ENCODE measurements at regions of chr15 and their contacts with region 1.

Region 1: GRCh38 chr15:90648137-90649070 is 68.7 kb upstream of the BLM start:
- DNase-seq: peak; percentile 67 to 97 (median 76)
- ATAC-seq: peak; percentile 83
- H3K4me3 ChIP-seq: no peak overlapping the region
- H3K27ac ChIP-seq: peak overlapping the region; percentile 97
- H3K4me1 ChIP-seq: peaks cover 33 to 38% of the 10 kb centered on the region in 2 experiments
- H3K27me3 ChIP-seq: no peaks in the 10 kb centered on the region
- CTCF ChIP-seq: peak; percentile 82 to 94 (median 88)
- EP300 ChIP-seq: peak; percentile 89
- POLR2A ChIP-seq: peak; percentile 92
- RAD21 ChIP-seq: peak; percentile 96

Region 2: GRCh38 chr15:90362936-90363212 is 285.5 kb before region 1 on chr15:
- CTCF ChIA-PET with region 1: no interaction called
- POLR2A ChIA-PET with region 1: no interaction called
- in situ Hi-C with region 1: no loop called
- intact Hi-C with region 1: no loop called
- DNase-seq: peak in 2 of 4 experiments; percentile 25 to 50
- ATAC-seq: peak; percentile 63
- H3K4me3 ChIP-seq: no peak overlapping the region
- H3K27ac ChIP-seq: peak overlapping the region; percentile 67; the same call in 1 of the 3 replicates
- H3K4me1 ChIP-seq: peaks cover 0 to 17% of the 10 kb centered on the region in 2 experiments; a peak in 4 of 5 replicates
- H3K27me3 ChIP-seq: no peaks in the 10 kb centered on the region
- CTCF ChIP-seq: no peak
- EP300 ChIP-seq: no peak
- POLR2A ChIP-seq: no peak
- RAD21 ChIP-seq: no peak

Region 3: GRCh38 chr15:90665288-90666134 is 17.1 kb after region 1 on chr15:
- CTCF ChIA-PET with region 1: no interaction called
- POLR2A ChIA-PET with region 1: interaction called, 6 read pairs
- in situ Hi-C with region 1: no loop called
- intact Hi-C with region 1: loop called (anchors 2 kb)
- DNase-seq: peak; percentile 75 to 82 (median 78)
- ATAC-seq: peak; percentile 85
- H3K4me3 ChIP-seq: peak overlapping the region; percentile 50
- H3K27ac ChIP-seq: peak overlapping the region; percentile 89
- H3K4me1 ChIP-seq: peaks cover 15 to 27% of the 10 kb centered on the region in 2 experiments; a peak in 4 of 5 replicates
- H3K27me3 ChIP-seq: no peaks in the 10 kb centered on the region
- CTCF ChIP-seq: no peak
- EP300 ChIP-seq: no peak
- POLR2A ChIP-seq: peak; percentile 79
- RAD21 ChIP-seq: no peak

Region 4: GRCh38 chr15:90691982-90692773 is 43.8 kb after region 1 on chr15:
- CTCF ChIA-PET with region 1: interaction called, 6 read pairs
- POLR2A ChIA-PET with region 1: no interaction called
- in situ Hi-C with region 1: loop called (anchors 10 kb)
- intact Hi-C with region 1: loop called (anchors 1 kb)
- DNase-seq: no peak
- ATAC-seq: no peak
- H3K4me3 ChIP-seq: no peak overlapping the region
- H3K27ac ChIP-seq: no peak overlapping the region
- H3K4me1 ChIP-seq: no peaks in the 10 kb centered on the region; a peak in 1 of 5 replicates
- H3K27me3 ChIP-seq: no peaks in the 10 kb centered on the region
- CTCF ChIP-seq: no peak
- EP300 ChIP-seq: no peak
- POLR2A ChIP-seq: no peak
- RAD21 ChIP-seq: no peak

Region 5: DNA sequence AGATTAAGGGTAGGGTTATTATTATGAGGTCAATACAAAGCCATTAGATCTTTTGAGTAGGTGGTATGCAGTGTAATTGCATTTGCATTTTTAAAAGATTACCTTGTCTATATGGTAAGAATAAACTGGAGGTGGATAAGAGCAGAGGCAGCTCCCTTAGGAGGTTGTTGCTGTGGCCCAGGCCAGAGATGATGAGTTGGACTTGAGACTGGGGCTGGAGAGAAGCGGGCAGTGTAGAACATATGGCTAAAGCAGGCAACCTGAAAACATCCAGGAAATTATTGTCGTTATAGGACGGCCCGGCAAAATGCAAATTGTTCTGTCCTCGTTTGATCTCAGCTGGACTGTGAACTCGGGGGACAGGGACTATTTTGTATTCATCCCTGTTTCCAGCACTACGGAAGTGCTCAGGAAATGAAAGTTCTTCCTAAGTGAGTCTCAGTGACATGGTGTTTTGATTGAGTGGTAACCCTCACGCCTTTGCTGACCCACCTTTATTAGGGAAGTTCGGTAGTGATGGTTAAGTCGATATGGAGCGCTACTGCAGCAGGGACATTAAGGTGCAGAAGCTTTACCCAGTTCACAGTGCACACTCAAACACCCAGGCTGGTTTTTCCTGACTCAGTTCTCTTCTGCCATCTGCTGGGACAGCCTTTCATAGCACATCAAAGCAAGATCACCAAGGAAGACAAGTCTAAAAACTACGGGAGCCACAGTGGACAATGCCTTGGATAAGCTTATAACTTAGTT is 401.1 kb after region 1 on chr15:
- CTCF ChIA-PET with region 1: no interaction called
- POLR2A ChIA-PET with region 1: no interaction called
- in situ Hi-C with region 1: no loop called
- intact Hi-C with region 1: loop called (anchors 1 kb)
- DNase-seq: peak; percentile 25 to 79 (median 45)
- ATAC-seq: peak; percentile 97
- H3K4me3 ChIP-seq: no peak overlapping the region
- H3K27ac ChIP-seq: no peak overlapping the region
- H3K4me1 ChIP-seq: peaks cover 0 to 10% of the 10 kb centered on the region in 2 experiments; a peak in 3 of 5 replicates
- H3K27me3 ChIP-seq: peaks cover 5 to 12% of the 10 kb centered on the region in 2 experiments; a peak in 4 of 5 replicates
- CTCF ChIP-seq: peak; percentile 75 to 84 (median 81)
- EP300 ChIP-seq: no peak
- POLR2A ChIP-seq: no peak
- RAD21 ChIP-seq: peak; percentile 85 to 88

Measured in K562 (cell line).